ENCODE measurements at regions of chr11 and their contacts with region 1.

Region 1: GRCh38 chr11:114598461-114598860 is 2.9 kb upstream of the NXPE4 start:
- DNase-seq: no peak
- ATAC-seq: no peak
- H3K4me3 ChIP-seq: no peak overlapping the region
- H3K27ac ChIP-seq: no peak overlapping the region
- H3K4me1 ChIP-seq: no peaks in the 10 kb centered on the region
- H3K27me3 ChIP-seq: peaks cover 3 to 13% of the 10 kb centered on the region in 2 experiments; a peak in 3 of 4 replicates
- CTCF ChIP-seq: no peak
- EP300 ChIP-seq: no peak
- POLR2A ChIP-seq: no peak
- RAD21 ChIP-seq: no peak

Region 2: DNA sequence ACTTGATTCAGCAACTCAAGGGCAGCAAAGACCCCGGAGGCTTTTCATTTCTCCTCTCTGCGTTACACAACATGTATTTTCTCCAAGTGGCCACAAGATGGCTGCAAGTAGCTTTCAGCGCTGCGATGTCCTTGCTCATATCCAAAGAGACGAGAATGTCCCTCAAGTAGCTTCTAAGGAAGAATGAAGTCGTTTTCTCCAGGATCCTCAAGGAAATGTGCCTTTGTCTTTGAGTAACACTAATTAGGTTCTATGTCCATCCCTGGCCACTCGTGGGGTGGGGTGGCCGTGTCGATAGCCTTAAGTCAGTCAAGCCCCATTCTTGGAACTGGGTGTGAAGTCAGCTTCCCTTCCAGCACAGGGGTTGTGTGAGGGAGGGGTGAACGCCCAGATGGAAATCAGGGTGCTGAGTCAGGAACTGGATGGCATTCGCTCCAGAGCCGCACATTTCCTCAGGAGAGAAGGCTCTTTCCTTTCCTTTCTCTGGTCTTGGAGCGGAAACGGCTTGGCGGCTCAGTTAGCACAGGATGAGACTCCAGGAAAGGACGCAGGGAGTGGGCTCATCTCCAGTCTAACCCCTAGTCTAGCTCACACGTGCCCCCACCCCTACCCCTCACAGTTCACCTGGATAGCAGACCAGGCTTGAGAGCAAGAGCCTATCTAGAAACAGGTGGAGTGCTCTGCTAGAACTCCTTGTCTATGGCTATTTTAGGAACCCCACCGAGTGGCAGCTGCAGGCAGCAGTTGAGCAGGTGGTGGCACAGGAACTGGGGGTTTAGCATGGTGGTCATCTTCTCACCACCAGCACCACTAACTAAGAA is 257.9 kb before region 1 on chr11:
- CTCF ChIA-PET with region 1: interaction called, 5 read pairs
- POLR2A ChIA-PET with region 1: no interaction called
- RAD21 ChIA-PET with region 1: interaction called, 3 read pairs
- SMC1A ChIA-PET with region 1: interaction called, 4 read pairs
- in situ Hi-C with region 1: loop called (anchors 10 kb)
- intact Hi-C with region 1: loop called (anchors 5 kb)
- DNase-seq: no peak
- ATAC-seq: peak; percentile 83
- H3K4me3 ChIP-seq: no peak overlapping the region
- H3K27ac ChIP-seq: no peak overlapping the region
- H3K4me1 ChIP-seq: no peaks in the 10 kb centered on the region
- H3K27me3 ChIP-seq: peaks cover 0 to 4% of the 10 kb centered on the region in 2 experiments; a peak in 2 of 4 replicates
- CTCF ChIP-seq: peak; percentile 71 to 76 (median 72)
- EP300 ChIP-seq: no peak
- POLR2A ChIP-seq: no peak
- RAD21 ChIP-seq: peak; percentile 74

Region 3: GRCh38 chr11:114348200-114349191 is 250.0 kb before region 1 on chr11:
- CTCF ChIA-PET with region 1: interaction called, 6 read pairs
- POLR2A ChIA-PET with region 1: no interaction called
- RAD21 ChIA-PET with region 1: no interaction called
- SMC1A ChIA-PET with region 1: interaction called, 3 read pairs
- in situ Hi-C with region 1: loop called (anchors 10 kb)
- intact Hi-C with region 1: loop called (anchors 5 kb)
- DNase-seq: no peak
- ATAC-seq: peak; percentile 70; the same call in 2 of the 3 replicates
- H3K4me3 ChIP-seq: no peak overlapping the region
- H3K27ac ChIP-seq: no peak overlapping the region
- H3K4me1 ChIP-seq: no peaks in the 10 kb centered on the region
- H3K27me3 ChIP-seq: peaks cover 2 to 3% of the 10 kb centered on the region in 2 experiments; a peak in 1 of 4 replicates
- CTCF ChIP-seq: peak; percentile 40 to 49 (median 43); a peak in 5 of 6 replicates
- EP300 ChIP-seq: no peak
- POLR2A ChIP-seq: no peak
- RAD21 ChIP-seq: peak; percentile 37

Region 4: DNA sequence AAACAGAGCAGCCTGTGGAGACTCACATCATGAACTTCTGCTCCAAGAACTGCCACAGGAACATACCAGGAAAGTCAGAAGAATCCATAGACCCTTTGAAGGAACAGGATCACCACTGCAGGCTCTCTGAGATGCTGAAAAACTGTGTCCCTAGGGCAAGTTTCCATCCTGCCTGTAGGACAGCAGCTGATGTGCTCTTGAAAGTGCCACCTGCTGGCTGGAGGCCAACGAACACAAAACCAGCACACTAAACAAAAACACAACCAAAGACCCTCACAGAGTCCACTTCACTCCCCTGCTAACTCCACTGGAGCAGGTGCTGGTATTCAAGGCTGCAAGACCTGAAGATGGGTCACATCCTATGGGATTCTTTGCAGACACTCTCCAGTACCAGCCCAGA is 26.7 kb before region 1 on chr11:
- CTCF ChIA-PET with region 1: no interaction called
- POLR2A ChIA-PET with region 1: no interaction called
- RAD21 ChIA-PET with region 1: no interaction called
- SMC1A ChIA-PET with region 1: no interaction called
- in situ Hi-C with region 1: no loop called
- intact Hi-C with region 1: no loop called
- DNase-seq: no peak
- ATAC-seq: no peak
- H3K4me3 ChIP-seq: no peak overlapping the region
- H3K27ac ChIP-seq: no peak overlapping the region
- H3K4me1 ChIP-seq: no peaks in the 10 kb centered on the region
- H3K27me3 ChIP-seq: peaks cover 0 to 6% of the 10 kb centered on the region in 2 experiments; a peak in 3 of 4 replicates
- CTCF ChIP-seq: no peak
- EP300 ChIP-seq: no peak
- POLR2A ChIP-seq: no peak
- RAD21 ChIP-seq: no peak

Region 5: GRCh38 chr11:114610984-114611944 is 12.8 kb after region 1 on chr11:
- CTCF ChIA-PET with region 1: no interaction called
- POLR2A ChIA-PET with region 1: no interaction called
- RAD21 ChIA-PET with region 1: no interaction called
- SMC1A ChIA-PET with region 1: no interaction called
- in situ Hi-C with region 1: no loop called
- intact Hi-C with region 1: no loop called
- DNase-seq: no peak
- ATAC-seq: no peak
- H3K4me3 ChIP-seq: no peak overlapping the region
- H3K27ac ChIP-seq: no peak overlapping the region
- H3K4me1 ChIP-seq: no peaks in the 10 kb centered on the region
- H3K27me3 ChIP-seq: no peaks in the 10 kb centered on the region
- CTCF ChIP-seq: no peak
- EP300 ChIP-seq: no peak
- POLR2A ChIP-seq: no peak
- RAD21 ChIP-seq: no peak

Region 6: GRCh38 chr11:114651145-114651718 is 52.8 kb after region 1 on chr11:
- CTCF ChIA-PET with region 1: no interaction called
- POLR2A ChIA-PET with region 1: no interaction called
- RAD21 ChIA-PET with region 1: no interaction called
- SMC1A ChIA-PET with region 1: no interaction called
- in situ Hi-C with region 1: no loop called
- intact Hi-C with region 1: no loop called
- DNase-seq: no peak
- ATAC-seq: no peak
- H3K4me3 ChIP-seq: no peak overlapping the region
- H3K27ac ChIP-seq: no peak overlapping the region
- H3K4me1 ChIP-seq: no peaks in the 10 kb centered on the region
- H3K27me3 ChIP-seq: peaks cover 0 to 2% of the 10 kb centered on the region in 2 experiments; a peak in 2 of 4 replicates
- CTCF ChIP-seq: no peak
- EP300 ChIP-seq: no peak
- POLR2A ChIP-seq: no peak
- RAD21 ChIP-seq: no peak

Region 7: GRCh38 chr11:114724916-114725524 is 126.6 kb after region 1 on chr11:
- CTCF ChIA-PET with region 1: no interaction called
- POLR2A ChIA-PET with region 1: no interaction called
- RAD21 ChIA-PET with region 1: no interaction called
- SMC1A ChIA-PET with region 1: no interaction called
- in situ Hi-C with region 1: no loop called
- intact Hi-C with region 1: no loop called
- DNase-seq: no peak
- ATAC-seq: no peak
- H3K4me3 ChIP-seq: no peak overlapping the region
- H3K27ac ChIP-seq: no peak overlapping the region
- H3K4me1 ChIP-seq: no peaks in the 10 kb centered on the region
- H3K27me3 ChIP-seq: no peaks in the 10 kb centered on the region
- CTCF ChIP-seq: no peak
- EP300 ChIP-seq: no peak
- POLR2A ChIP-seq: no peak
- RAD21 ChIP-seq: no peak

Measured in GM12878 (cell line).